Tibial artery (tissue), 4 donors: ENCODE measurements at regions of chr12 and their contacts with region 1.

Region 1: DNA sequence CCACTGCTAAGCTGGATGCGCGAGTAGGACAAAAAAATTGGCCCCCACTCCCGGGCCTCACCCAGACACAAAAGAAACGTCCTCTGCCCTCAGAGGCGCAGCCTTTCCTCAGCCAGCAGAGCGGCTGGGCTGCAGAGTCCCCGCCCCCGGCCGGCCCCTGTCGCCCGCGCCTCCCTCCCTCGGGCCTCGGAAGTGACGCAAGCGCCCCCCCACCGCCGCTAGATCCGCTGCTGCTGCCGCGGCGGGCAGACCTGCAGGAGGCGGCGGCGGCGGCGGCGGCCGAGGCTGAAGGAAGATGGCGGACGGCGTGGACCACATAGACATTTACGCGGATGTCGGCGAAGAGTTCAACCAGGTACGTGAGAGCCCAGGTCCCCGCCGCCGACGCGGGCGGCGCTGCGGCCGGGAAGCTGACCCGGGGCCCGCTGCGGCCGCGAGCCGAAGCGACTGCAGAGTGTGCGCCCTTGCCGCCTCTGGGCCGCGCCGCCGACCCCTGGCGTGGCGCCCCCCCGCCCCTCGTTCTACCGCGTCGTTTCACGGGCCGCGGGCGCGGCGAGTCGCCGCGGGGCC is at the start of gene CPSF6:
- DNase-seq: peak; percentile 93 to 97
- H3K4me3 ChIP-seq: peak within 1 kb of the TSS; percentile 66 to 91
- H3K27ac ChIP-seq: peak within 1 kb of the TSS; percentile 86 to 92
- H3K4me1 ChIP-seq: peaks cover 0 to 39% (median 12%) of the 10 kb centered on the region in 4 donors
- H3K27me3 ChIP-seq: no peaks in the 10 kb centered on the region
- CTCF ChIP-seq: no peak

Region 2: DNA sequence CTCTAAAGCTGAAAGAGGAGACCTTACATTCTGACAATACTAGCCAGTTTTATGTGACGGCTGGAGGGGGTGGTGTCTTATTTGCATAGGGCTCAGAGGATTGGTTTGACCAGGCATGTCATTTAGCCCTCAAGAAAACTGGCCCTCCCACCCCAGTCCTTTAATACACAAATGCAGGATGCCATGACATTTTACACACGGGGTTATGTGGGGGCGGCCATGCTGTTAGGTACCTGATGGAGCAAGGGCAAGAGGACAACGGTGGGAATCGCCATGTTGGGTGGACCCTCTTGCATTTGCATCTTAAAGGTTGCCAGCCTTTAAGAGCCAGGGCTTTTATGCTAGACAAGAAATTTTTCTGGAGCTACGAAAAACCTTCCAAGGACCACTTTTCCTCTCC is 408.2 kb before region 1 on chr12:
- intact Hi-C with region 1: no loop called
- DNase-seq: no peak
- H3K4me3 ChIP-seq: no peak overlapping the region
- H3K27ac ChIP-seq: no peak overlapping the region
- H3K4me1 ChIP-seq: peaks cover 0 to 6% (median 0%) of the 10 kb centered on the region in 4 donors
- H3K27me3 ChIP-seq: no peaks in the 10 kb centered on the region
- CTCF ChIP-seq: no peak

Region 3: GRCh38 chr12:69585189-69586062 is 346.0 kb after region 1 on chr12 and contains the start of gene CCT2:
- intact Hi-C with region 1: loop called (anchors 5 kb)
- DNase-seq: peak; percentile 97 to 98
- H3K4me3 ChIP-seq: peak within 1 kb of the TSS; percentile 91 to 98
- H3K27ac ChIP-seq: peak within 1 kb of the TSS; percentile 82 to 88
- H3K4me1 ChIP-seq: peaks cover 0 to 13% (median 7%) of the 10 kb centered on the region in 4 donors
- H3K27me3 ChIP-seq: no peaks in the 10 kb centered on the region
- CTCF ChIP-seq: peak in 1 of 2 experiments; percentile 20